K562 (cell line): ENCODE measurements at regions of chr3 and their contacts with region 1.

Region 1: GRCh38 chr3:128075516-128076482 is 23.6 kb downstream of the SEC61A1 start:
- DNase-seq: peak; percentile 82 to 90 (median 82)
- ATAC-seq: peak; percentile 82
- H3K4me3 ChIP-seq: peak overlapping the region; percentile 47
- H3K27ac ChIP-seq: peak overlapping the region; percentile 96
- H3K4me1 ChIP-seq: peaks cover 38 to 58% of the 10 kb centered on the region in 2 experiments
- H3K27me3 ChIP-seq: no peaks in the 10 kb centered on the region
- CTCF ChIP-seq: peak; percentile 78 to 92 (median 85)
- EP300 ChIP-seq: 0 out of 2 replicates have a peak, but pooled peaks have one; percentile 12
- POLR2A ChIP-seq: peak; percentile 45
- RAD21 ChIP-seq: peak; percentile 70 to 78

Region 2: GRCh38 chr3:127929824-127930413 is 145.9 kb before region 1 on chr3:
- CTCF ChIA-PET with region 1: no interaction called
- POLR2A ChIA-PET with region 1: no interaction called
- in situ Hi-C with region 1: no loop called
- intact Hi-C with region 1: no loop called
- DNase-seq: no peak
- ATAC-seq: no peak
- H3K4me3 ChIP-seq: no peak overlapping the region
- H3K27ac ChIP-seq: no peak overlapping the region
- H3K4me1 ChIP-seq: no peaks in the 10 kb centered on the region
- H3K27me3 ChIP-seq: no peaks in the 10 kb centered on the region
- CTCF ChIP-seq: no peak
- EP300 ChIP-seq: no peak
- POLR2A ChIP-seq: no peak
- RAD21 ChIP-seq: no peak

Region 3: GRCh38 chr3:128123538-128124368 is 48.0 kb after region 1 on chr3 and contains the start of gene RUVBL1:
- CTCF ChIA-PET with region 1: no interaction called
- POLR2A ChIA-PET with region 1: interaction called, 4 read pairs
- in situ Hi-C with region 1: no loop called
- intact Hi-C with region 1: loop called (anchors 2 kb)
- DNase-seq: peak; percentile 96 to 97 (median 96)
- ATAC-seq: peak; percentile 100
- H3K4me3 ChIP-seq: peak within 1 kb of the TSS; percentile 79
- H3K27ac ChIP-seq: peak within 1 kb of the TSS; percentile 84
- H3K4me1 ChIP-seq: peaks cover 4 to 18% of the 10 kb centered on the region in 2 experiments; a peak in 4 of 5 replicates
- H3K27me3 ChIP-seq: no peaks in the 10 kb centered on the region
- CTCF ChIP-seq: no peak
- EP300 ChIP-seq: peak; percentile 44; the same call in 1 of the 2 replicates
- POLR2A ChIP-seq: peak; percentile 87
- RAD21 ChIP-seq: 0 out of 4 replicates have a peak, but pooled peaks of 1 of the 2 experiments have one; percentile 13
- polyA plus RNA-seq, gene RUVBL1: 20.7 to 40.2 TPM

Region 4: DNA sequence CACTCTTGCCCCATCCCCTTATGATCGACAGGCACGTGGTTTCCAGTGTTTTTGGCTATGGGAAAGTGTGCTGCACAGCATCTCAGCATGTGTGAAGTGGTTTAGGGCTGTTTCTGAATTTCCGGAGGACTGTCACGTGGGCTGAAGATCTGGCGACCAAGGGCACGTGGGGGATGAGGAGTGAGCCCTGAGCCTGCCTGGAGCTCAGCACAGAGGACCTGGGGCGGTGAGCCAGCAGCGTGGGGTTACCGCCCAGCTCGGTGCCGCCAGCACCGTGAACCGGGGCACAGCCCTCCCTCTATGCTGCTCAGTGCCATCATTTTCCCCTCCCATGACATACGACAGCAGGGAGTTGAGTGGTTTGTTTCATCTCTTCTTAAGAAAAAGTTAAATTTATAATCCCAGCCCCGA is 240.7 kb after region 1 on chr3:
- CTCF ChIA-PET with region 1: no interaction called
- POLR2A ChIA-PET with region 1: no interaction called
- in situ Hi-C with region 1: no loop called
- intact Hi-C with region 1: no loop called
- DNase-seq: no peak
- ATAC-seq: no peak
- H3K4me3 ChIP-seq: no peak overlapping the region
- H3K27ac ChIP-seq: no peak overlapping the region
- H3K4me1 ChIP-seq: peaks cover 0 to 3% of the 10 kb centered on the region in 2 experiments; a peak in 2 of 5 replicates
- H3K27me3 ChIP-seq: no peaks in the 10 kb centered on the region
- CTCF ChIP-seq: no peak
- EP300 ChIP-seq: no peak
- POLR2A ChIP-seq: no peak
- RAD21 ChIP-seq: no peak